H1 (cell line): ENCODE measurements at regions of chr2 and their contacts with region 1.

Region 1: GRCh38 chr2:7867867-7868266 is 814.0 kb upstream of the ID2 start:
- DNase-seq: no peak
- H3K4me3 ChIP-seq: no peak overlapping the region
- H3K27ac ChIP-seq: no peak overlapping the region
- H3K4me1 ChIP-seq: peaks cover 3 to 12% (median 7%) of the 10 kb centered on the region in 4 experiments; a peak in 5 of 7 replicates
- H3K27me3 ChIP-seq: no peaks in the 10 kb centered on the region
- CTCF ChIP-seq: no peak
- EP300 ChIP-seq: no peak
- POLR2A ChIP-seq: no peak
- RAD21 ChIP-seq: no peak

Region 2: GRCh38 chr2:7878786-7879482 is 11.1 kb after region 1 on chr2:
- CTCF ChIA-PET with region 1: no interaction called
- POLR2A ChIA-PET with region 1: interaction called, 12 read pairs
- DNase-seq: peak; percentile 66
- H3K4me3 ChIP-seq: peak overlapping the region; percentile 5 to 71 (median 45)
- H3K27ac ChIP-seq: peak overlapping the region; percentile 84
- H3K4me1 ChIP-seq: peaks cover 3 to 24% (median 10%) of the 10 kb centered on the region in 4 experiments
- H3K27me3 ChIP-seq: no peaks in the 10 kb centered on the region
- CTCF ChIP-seq: no peak
- EP300 ChIP-seq: no peak
- POLR2A ChIP-seq: peak in 1 of 2 experiments; percentile 76; a peak in 2 of 3 replicates
- RAD21 ChIP-seq: peak in 1 of 2 experiments; percentile 22; a peak in 1 of 4 replicates